ENCODE measurements at regions of chr19 and their contacts with region 1.

Region 1: GRCh38 chr19:39445265-39446111 is at the start of gene SUPT5H:
- DNase-seq: peak; percentile 96 to 98
- ATAC-seq: peak; percentile 98 to 99 (median 99)
- H3K4me3 ChIP-seq: peak within 1 kb of the TSS; percentile 72 to 97 (median 84)
- H3K27ac ChIP-seq: peak within 1 kb of the TSS; percentile 70 to 97 (median 93)
- H3K4me1 ChIP-seq: peaks cover 6 to 49% (median 35%) of the 10 kb centered on the region in 9 donors
- H3K27me3 ChIP-seq: no peaks in the 10 kb centered on the region
- CTCF ChIP-seq: no peak
- total RNA-seq, gene SUPT5H: 65.0 to 96.6 (median 84.3) TPM

Region 2: GRCh38 chr19:39390755-39391592 is 54.5 kb before region 1 on chr19 and contains the starts of genes MED29 and PAF1:
- intact Hi-C with region 1: loop called in 1 of 10 experiments (anchors 2 kb)
- DNase-seq: peak; percentile 94 to 99
- ATAC-seq: peak; percentile 94 to 98 (median 96)
- H3K4me3 ChIP-seq: peak within 1 kb of the TSS; percentile 66 to 99 (median 94)
- H3K27ac ChIP-seq: peak within 1 kb of the TSS; percentile 94 to 100 (median 98)
- H3K4me1 ChIP-seq: peaks cover 12 to 27% (median 24%) of the 10 kb centered on the region in 9 donors
- H3K27me3 ChIP-seq: no peaks in the 10 kb centered on the region
- CTCF ChIP-seq: peak in 2 of 9 donors; percentile 4 to 16
- total RNA-seq, gene MED29: 22.9 to 32.3 (median 27.1) TPM
- total RNA-seq, gene PAF1: 34.3 to 46.4 (median 38.8) TPM

Region 3: DNA sequence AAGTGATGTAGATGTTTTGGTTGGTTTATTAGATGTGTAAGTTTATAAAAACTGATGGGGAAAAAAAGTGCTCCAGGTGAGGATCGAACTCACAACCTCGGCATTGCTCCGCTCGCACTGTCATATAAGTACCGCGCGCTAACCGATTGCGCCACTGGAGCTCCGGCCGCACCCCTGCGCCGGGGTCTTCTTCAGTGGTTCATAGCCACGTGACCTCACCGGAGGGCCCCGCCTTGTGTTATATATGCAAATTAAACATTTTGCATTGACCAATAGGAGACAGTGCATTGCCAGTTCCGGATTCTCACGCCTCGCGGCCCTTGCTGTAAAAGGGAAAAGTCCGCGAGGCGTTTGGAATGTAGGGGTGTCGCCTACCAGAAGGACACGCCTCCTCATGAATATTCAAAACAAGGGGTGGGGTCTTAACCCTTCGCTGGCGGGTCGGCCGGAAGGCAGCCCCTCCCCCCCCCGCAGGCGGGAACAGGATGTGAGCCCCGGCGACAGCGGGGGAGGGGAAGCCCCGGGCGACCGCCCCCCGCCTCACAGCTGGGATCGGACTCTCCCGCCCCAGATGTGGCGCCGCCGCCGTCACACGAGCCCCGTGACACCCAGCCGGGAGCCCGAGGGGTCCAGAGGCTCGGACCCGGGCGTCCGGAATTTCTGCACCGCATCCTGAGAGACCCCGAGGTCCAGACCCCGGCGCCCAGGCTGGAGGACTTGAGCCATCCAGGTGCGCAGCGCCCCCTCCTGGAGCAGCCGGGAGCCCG is 33.2 kb before region 1 on chr19 and contains the start of gene PLEKHG2:
- intact Hi-C with region 1: loop called in 1 of 10 experiments (anchors 2 kb)
- DNase-seq: peak; percentile 94 to 98
- ATAC-seq: peak; percentile 57 to 74 (median 72)
- H3K4me3 ChIP-seq: peak within 1 kb of the TSS; percentile 66 to 98 (median 86)
- H3K27ac ChIP-seq: peak within 1 kb of the TSS; percentile 94 to 100 (median 99)
- H3K4me1 ChIP-seq: peaks cover 11 to 71% (median 53%) of the 10 kb centered on the region in 9 donors
- H3K27me3 ChIP-seq: no peaks in the 10 kb centered on the region
- CTCF ChIP-seq: peak; percentile 68 to 93 (median 88)
- total RNA-seq, gene PLEKHG2: 8.3 to 23.1 (median 15.1) TPM

Region 4: GRCh38 chr19:39480337-39481228 is 35.1 kb after region 1 on chr19 and contains the start of gene TIMM50:
- intact Hi-C with region 1: loop called in 1 of 10 experiments (anchors 5 kb)
- DNase-seq: peak; percentile 97 to 98
- ATAC-seq: peak; percentile 97 to 99 (median 98)
- H3K4me3 ChIP-seq: peak within 1 kb of the TSS; percentile 71 to 100 (median 94)
- H3K27ac ChIP-seq: peak within 1 kb of the TSS; percentile 66 to 89 (median 82)
- H3K4me1 ChIP-seq: peaks cover 3 to 23% (median 19%) of the 10 kb centered on the region in 9 donors
- H3K27me3 ChIP-seq: no peaks in the 10 kb centered on the region
- CTCF ChIP-seq: no peak
- total RNA-seq, gene TIMM50: 67.3 to 111 (median 78.9) TPM

Region 5: GRCh38 chr19:39671738-39672363 is 226.4 kb after region 1 on chr19:
- intact Hi-C with region 1: loop called in 1 of 10 experiments (anchors 5 kb)
- DNase-seq: peak in 1 of 2 donors; percentile 26
- ATAC-seq: peak in 1 of 8 donors; percentile 56
- H3K4me3 ChIP-seq: no peak overlapping the region
- H3K27ac ChIP-seq: no peak overlapping the region
- H3K4me1 ChIP-seq: peaks cover 0 to 9% (median 0%) of the 10 kb centered on the region in 9 donors
- H3K27me3 ChIP-seq: peaks cover 0 to 24% (median 10%) of the 10 kb centered on the region in 7 donors
- CTCF ChIP-seq: peak; percentile 20 to 66 (median 49)

Measured in heart right ventricle (tissue), 16 donors.